ENCODE measurements at regions of chr1 and their contacts with region 1.

Region 1: GRCh38 chr1:78743626-78744025 is 94.0 kb downstream of the IFI44 start:
- DNase-seq: no peak
- H3K4me3 ChIP-seq: no peak overlapping the region
- CTCF ChIP-seq: peak; percentile 3

Region 2: DNA sequence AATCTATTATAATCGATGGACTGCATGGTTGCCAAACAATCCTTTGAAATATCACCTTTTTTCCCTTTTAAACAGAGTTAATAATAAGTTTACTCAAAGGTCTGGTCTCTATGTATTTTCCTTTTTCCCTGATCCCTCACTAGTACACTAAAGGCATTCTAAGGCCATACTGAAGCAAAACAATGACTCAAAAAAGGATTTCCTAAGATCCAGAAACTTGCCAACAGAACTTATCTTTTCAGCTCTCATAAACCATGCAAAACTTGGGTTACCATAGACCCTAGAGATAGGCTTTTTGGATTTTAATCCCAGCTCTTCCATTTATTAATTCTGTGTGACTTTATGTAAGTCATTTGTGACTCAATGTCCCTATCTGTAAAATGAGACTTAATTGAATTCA is 16.9 kb before region 1 on chr1:
- CTCF ChIA-PET with region 1: interaction called, 11 read pairs
- POLR2A ChIA-PET with region 1: no interaction called
- DNase-seq: no peak
- H3K4me3 ChIP-seq: no peak overlapping the region
- CTCF ChIP-seq: no peak

Region 3: GRCh38 chr1:78958711-78959110 is 215.1 kb after region 1 on chr1:
- CTCF ChIA-PET with region 1: no interaction called
- POLR2A ChIA-PET with region 1: no interaction called
- DNase-seq: no peak
- H3K4me3 ChIP-seq: no peak overlapping the region
- CTCF ChIP-seq: no peak

Measured in AG04449 (cell line).